IMR-90 (cell line): ENCODE measurements at regions of chr9 and their contacts with region 1.

Region 1: DNA sequence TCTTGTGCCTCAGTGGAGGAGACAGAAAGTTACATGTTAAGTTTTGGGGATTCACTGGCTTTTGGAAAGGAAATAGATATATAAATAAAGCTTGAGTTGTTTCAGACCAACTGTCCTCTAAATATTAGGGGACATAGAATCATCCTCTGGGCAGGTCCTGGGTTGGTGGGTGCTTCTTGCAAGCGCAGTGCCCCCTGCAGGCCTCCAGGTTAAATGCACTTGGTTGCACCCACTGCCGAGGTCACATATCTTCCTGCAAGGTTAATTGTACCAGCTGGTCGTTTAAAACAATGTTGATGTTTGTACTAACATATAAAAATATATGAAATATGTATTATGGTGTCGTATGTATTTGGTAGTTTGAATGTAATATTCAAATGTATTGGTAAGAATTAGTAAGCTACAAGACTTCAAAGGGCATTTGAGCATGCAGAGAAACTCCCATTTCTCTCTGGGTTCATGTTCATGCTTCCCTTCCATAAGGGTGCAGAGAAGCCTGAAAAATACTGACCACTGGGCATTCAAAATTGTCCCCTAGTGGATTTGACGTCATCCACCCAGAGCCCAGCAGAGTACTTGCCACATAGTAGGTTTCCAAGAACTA is 87.0 kb downstream of the ZNF618 start:
- DNase-seq: peak; percentile 49
- ATAC-seq: peak; percentile 77; the same call in 1 of the 2 replicates
- H3K4me3 ChIP-seq: no peak overlapping the region
- H3K27ac ChIP-seq: no peak overlapping the region
- H3K4me1 ChIP-seq: peaks cover 14% of the 10 kb centered on the region
- H3K27me3 ChIP-seq: no peaks in the 10 kb centered on the region
- CTCF ChIP-seq: peak; percentile 71
- POLR2A ChIP-seq: no peak
- RAD21 ChIP-seq: peak; percentile 66

Region 2: GRCh38 chr9:113807173-113808061 is 155.7 kb before region 1 on chr9:
- CTCF ChIA-PET with region 1: interaction called, 3 read pairs
- POLR2A ChIA-PET with region 1: no interaction called
- dilution Hi-C with region 1: no loop called
- in situ Hi-C with region 1: no loop called
- intact Hi-C with region 1: loop called (anchors 1 kb)
- DNase-seq: peak; percentile 60
- ATAC-seq: peak; percentile 95
- H3K4me3 ChIP-seq: no peak overlapping the region
- H3K27ac ChIP-seq: no peak overlapping the region
- H3K4me1 ChIP-seq: no peaks in the 10 kb centered on the region
- H3K27me3 ChIP-seq: peaks cover 4% of the 10 kb centered on the region; the same call in 1 of the 2 replicates
- CTCF ChIP-seq: peak; percentile 83
- POLR2A ChIP-seq: no peak
- RAD21 ChIP-seq: peak; percentile 84

Region 3: DNA sequence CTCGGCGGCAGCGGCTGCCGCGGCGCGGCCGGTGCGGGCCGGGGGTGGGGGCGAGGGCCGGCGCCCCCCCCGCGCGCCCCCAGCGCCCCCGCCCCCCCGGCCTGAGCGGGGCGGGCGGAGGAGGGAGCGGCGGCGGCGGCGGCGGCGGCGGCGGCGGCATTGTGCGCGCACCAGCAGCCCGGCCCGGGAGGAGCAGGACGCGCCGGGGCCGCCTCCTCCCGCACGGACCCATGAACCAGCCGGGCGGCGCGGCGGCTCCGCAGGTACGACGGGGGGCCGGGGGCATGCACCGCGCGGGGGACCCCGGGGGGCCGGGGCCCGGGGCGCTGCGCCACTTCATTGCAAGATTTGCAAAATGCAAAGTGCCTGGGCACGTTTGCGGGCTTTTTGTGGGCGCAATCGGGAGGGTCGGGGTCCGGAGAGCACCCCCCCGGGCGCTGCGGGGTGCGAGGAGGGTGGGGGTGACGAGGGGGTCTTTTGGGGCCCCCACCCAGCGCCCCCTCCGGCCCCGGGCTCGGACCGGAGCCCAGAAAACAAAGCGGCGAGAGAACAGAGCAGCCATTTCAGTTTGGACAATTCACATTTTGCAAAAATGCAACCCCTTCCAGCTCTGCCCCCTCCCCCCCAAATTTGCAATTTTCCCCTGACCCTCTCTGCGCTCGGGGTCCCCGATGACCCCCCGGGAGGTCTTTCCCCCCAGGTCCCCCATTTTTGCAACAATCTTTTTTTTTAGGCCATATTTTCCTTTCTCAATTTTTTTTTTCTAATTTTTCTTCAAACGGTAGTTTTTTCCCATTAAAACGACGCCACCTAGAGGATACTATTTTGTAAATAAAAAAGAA is 86.7 kb before region 1 on chr9 and contains the start of gene ZNF618:
- CTCF ChIA-PET with region 1: interaction called, 3 read pairs
- POLR2A ChIA-PET with region 1: no interaction called
- dilution Hi-C with region 1: no loop called
- in situ Hi-C with region 1: no loop called
- intact Hi-C with region 1: loop called (anchors 5 kb)
- DNase-seq: peak; percentile 27
- ATAC-seq: peak; percentile 92
- H3K4me3 ChIP-seq: peak within 1 kb of the TSS; percentile 100
- H3K27ac ChIP-seq: peak within 1 kb of the TSS; percentile 99
- H3K4me1 ChIP-seq: peaks cover 5% of the 10 kb centered on the region
- H3K27me3 ChIP-seq: peaks cover 3% of the 10 kb centered on the region
- CTCF ChIP-seq: peak; percentile 45
- POLR2A ChIP-seq: no peak
- RAD21 ChIP-seq: no peak
- total RNA-seq, gene ZNF618: 7.5 and 8.2 TPM in 2 replicates

Region 4: GRCh38 chr9:113995963-113996362 is 32.8 kb after region 1 on chr9:
- CTCF ChIA-PET with region 1: interaction called, 15 read pairs
- POLR2A ChIA-PET with region 1: no interaction called
- dilution Hi-C with region 1: no loop called
- in situ Hi-C with region 1: no loop called
- intact Hi-C with region 1: no loop called
- DNase-seq: no peak
- ATAC-seq: no peak
- H3K4me3 ChIP-seq: no peak overlapping the region
- H3K27ac ChIP-seq: no peak overlapping the region
- H3K4me1 ChIP-seq: peaks cover 5% of the 10 kb centered on the region; the same call in 1 of the 2 replicates
- H3K27me3 ChIP-seq: no peaks in the 10 kb centered on the region
- CTCF ChIP-seq: no peak
- POLR2A ChIP-seq: no peak
- RAD21 ChIP-seq: no peak